HCT116 (cell line): ENCODE measurements at regions of chr4 and their contacts with region 1.

Region 1: GRCh38 chr4:34953145-34953799 is 1291.0 kb downstream of the ARAP2 start:
- DNase-seq: peak; percentile 65
- ATAC-seq: peak; percentile 100
- H3K4me3 ChIP-seq: no peak overlapping the region
- H3K27ac ChIP-seq: no peak overlapping the region
- H3K4me1 ChIP-seq: no peaks in the 10 kb centered on the region; a peak in 1 of 4 replicates
- H3K27me3 ChIP-seq: no peaks in the 10 kb centered on the region
- CTCF ChIP-seq: peak; percentile 27 to 83 (median 70); a peak in 5 of 6 replicates
- POLR2A ChIP-seq: no peak
- RAD21 ChIP-seq: peak; percentile 55

Region 2: GRCh38 chr4:35934320-35934981 is 981.2 kb after region 1 on chr4:
- CTCF ChIA-PET with region 1: interaction called, 3 read pairs
- POLR2A ChIA-PET with region 1: no interaction called
- RAD21 ChIA-PET with region 1: no interaction called
- intact Hi-C with region 1: loop called (anchors 10 kb)
- DNase-seq: peak; percentile 12
- ATAC-seq: peak; percentile 47; the same call in 1 of the 2 replicates
- H3K4me3 ChIP-seq: no peak overlapping the region
- H3K27ac ChIP-seq: no peak overlapping the region
- H3K4me1 ChIP-seq: no peaks in the 10 kb centered on the region
- H3K27me3 ChIP-seq: no peaks in the 10 kb centered on the region
- CTCF ChIP-seq: peak; percentile 22 to 67 (median 42); a peak in 3 of 6 replicates
- POLR2A ChIP-seq: no peak
- RAD21 ChIP-seq: peak; percentile 65